Activated CD4-positive, alpha-beta T cell treated with anti-CD3 and anti-CD28 coated beads for 36 hours (primary cell): ENCODE measurements at regions of chr1 and their contacts with region 1.

Region 1: DNA sequence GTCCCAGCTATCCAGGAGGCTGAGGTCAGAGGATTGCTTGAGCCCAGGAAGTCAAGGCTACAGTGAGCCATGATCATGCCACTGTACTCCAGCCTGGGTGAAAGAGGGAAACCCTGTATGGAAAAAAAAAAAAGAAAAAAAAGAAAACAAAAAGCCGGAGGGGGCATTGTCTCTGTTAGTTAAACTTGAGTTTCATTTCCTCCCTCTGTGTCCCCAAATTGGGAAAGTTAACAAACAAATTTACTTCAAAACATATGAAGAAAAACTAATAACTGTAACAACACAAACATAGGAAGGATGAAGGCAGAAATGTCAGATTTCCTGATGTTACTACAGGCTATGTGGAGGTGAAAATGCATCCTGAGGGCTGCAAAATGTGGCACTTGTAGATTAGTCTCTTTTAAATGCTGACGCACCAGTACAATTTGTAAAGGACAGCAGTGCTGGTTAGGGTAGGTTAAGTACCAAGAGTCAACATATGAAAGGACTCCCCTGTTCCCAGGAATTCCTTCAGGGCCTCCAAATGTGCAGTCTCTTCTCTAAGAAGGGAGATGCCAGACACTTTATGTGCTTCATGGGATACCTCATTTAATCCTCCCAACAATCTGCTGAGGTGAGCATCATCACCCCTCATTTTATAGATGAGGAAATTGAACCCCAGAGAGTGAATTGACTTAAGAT is 52.9 kb downstream of the DEGS1 start:
- DNase-seq: no peak
- ATAC-seq: no peak
- H3K4me3 Mint-ChIP-seq: no peak overlapping the region
- H3K27ac Mint-ChIP-seq: no peak overlapping the region
- H3K4me1 Mint-ChIP-seq: no peaks in the 10 kb centered on the region
- H3K27me3 Mint-ChIP-seq: no peaks in the 10 kb centered on the region

Region 2: DNA sequence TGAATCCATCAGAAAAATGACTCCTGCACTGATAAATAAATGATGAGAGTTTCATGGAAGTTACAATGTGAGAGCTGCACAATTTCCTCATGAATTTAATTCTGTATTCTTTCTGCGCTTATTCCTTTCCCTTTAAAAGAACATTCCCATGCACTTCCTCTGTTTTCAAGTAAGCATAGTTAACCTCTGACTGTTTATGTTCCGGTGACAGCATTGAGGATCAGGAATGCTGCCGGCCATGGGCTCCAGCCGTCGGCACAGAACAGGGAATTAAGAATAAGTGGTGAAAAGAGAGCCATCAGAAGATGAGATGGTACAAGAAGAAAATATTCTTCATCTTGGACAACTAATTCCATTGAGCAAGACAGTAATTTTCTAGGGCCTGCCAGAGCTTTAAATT is 937.3 kb before region 1 on chr1:
- CTCF ChIA-PET with region 1: no interaction called
- POLR2A ChIA-PET with region 1: no interaction called
- intact Hi-C with region 1: loop called in 1 of 2 experiments (anchors 5 kb)
- DNase-seq: no peak
- ATAC-seq: no peak
- H3K4me3 Mint-ChIP-seq: no peak overlapping the region
- H3K27ac Mint-ChIP-seq: no peak overlapping the region
- H3K4me1 Mint-ChIP-seq: peaks cover 30% of the 10 kb centered on the region
- H3K27me3 Mint-ChIP-seq: no peaks in the 10 kb centered on the region

Region 3: DNA sequence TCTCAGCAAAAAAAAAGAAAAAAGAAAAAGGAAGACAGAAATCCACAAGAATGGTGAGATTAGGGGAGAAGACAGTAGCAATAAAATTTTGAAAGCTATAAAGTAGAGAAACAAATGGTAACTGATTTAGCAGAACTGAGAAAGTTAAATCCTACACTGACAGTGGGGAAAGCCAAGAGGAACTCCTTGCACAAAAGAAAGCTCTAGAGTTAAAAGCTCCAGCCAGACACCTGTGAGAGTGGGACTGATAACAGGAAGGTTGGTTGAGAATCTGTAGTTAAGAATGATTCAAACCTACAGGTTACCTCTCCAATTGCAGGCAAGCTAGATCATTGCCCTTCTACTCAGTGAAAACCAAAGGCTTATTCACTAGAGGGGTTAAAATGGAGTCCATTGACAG is 98.4 kb before region 1 on chr1:
- CTCF ChIA-PET with region 1: no interaction called
- POLR2A ChIA-PET with region 1: interaction called, 14 read pairs
- intact Hi-C with region 1: no loop called
- DNase-seq: no peak
- ATAC-seq: no peak
- H3K4me3 Mint-ChIP-seq: no peak overlapping the region
- H3K27ac Mint-ChIP-seq: no peak overlapping the region
- H3K4me1 Mint-ChIP-seq: no peaks in the 10 kb centered on the region
- H3K27me3 Mint-ChIP-seq: no peaks in the 10 kb centered on the region

Region 4: GRCh38 chr1:224223819-224224714 is 11.9 kb before region 1 on chr1:
- CTCF ChIA-PET with region 1: no interaction called
- POLR2A ChIA-PET with region 1: no interaction called
- intact Hi-C with region 1: no loop called
- DNase-seq: no peak
- ATAC-seq: no peak
- H3K4me3 Mint-ChIP-seq: no peak overlapping the region
- H3K27ac Mint-ChIP-seq: no peak overlapping the region
- H3K4me1 Mint-ChIP-seq: no peaks in the 10 kb centered on the region
- H3K27me3 Mint-ChIP-seq: no peaks in the 10 kb centered on the region